Activated CD4-positive, alpha-beta memory T cell treated with anti-CD3 and anti-CD28 coated beads, Interleukin-2, amount 10 ng/mL, durations not matched to agents 7 days and 5 days (primary cell): ENCODE measurements at regions of chr4 and their contacts with region 1.

Region 1: DNA sequence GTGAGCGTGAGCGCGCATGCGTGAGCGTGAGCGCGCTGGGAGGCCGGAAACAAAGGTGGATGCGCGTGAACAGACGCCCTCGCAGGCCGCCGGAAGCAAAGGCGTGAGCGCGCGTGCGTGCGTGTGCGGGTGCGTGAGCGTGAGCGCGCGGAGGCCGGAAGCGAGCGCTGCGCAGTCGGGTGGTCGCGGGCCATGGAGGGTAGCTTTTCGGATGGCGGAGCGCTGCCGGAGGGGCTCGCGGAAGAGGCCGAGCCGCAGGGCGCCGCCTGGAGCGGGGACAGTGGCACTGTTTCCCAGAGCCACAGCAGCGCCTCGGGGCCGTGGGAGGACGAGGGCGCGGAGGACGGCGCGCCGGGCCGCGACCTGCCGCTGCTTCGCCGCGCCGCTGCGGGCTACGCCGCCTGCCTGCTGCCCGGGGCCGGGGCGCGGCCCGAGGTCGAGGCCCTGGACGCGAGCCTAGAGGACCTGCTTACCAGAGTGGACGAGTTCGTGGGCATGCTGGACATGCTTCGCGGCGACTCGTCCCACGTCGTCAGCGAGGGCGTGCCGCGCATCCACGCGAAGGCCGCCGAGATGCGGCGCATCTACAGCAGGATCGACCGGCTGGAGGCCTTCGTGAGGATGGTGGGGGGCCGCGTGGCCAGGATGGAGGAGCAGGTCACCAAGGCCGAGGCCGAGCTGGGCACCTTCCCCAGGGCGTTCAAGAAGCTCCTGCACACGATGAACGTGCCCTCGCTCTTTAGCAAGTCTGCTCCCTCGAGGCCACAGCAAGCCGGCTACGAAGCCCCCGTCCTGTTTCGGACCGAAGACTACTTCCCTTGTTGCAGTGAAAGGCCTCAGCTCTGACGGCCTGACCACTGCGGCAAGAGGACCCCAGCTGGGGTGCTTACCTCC is at the start of gene BLOC1S4:
- DNase-seq: peak; percentile 91
- H3K4me3 Mint-ChIP-seq: peak within 1 kb of the TSS; percentile 88
- H3K27ac Mint-ChIP-seq: peak within 1 kb of the TSS; percentile 87
- H3K4me1 Mint-ChIP-seq: peaks cover 36% of the 10 kb centered on the region
- H3K27me3 Mint-ChIP-seq: no peaks in the 10 kb centered on the region
- total RNA-seq, gene BLOC1S4: 22.9 to 23.2 TPM

Region 2: DNA sequence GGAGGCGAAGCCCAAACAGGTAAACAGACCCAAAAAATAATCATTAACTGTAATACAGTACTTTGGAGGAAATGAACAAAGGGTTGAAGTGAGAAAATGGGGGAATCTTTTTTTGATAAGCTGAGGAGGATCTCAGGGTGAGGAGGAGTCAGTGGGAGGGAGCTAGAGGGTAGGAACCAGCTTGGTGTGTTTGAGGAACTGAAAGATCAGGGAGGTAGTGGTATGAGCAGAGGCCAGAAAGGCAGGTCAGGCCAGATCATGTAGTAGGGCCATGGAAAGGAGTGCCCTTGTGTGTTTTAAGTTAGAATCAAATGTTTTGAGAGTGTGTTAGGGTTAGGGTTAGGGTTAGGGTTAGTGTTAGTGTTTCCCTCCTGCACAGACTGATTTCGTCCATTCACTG is 292.7 kb before region 1 on chr4:
- CTCF ChIA-PET with region 1: no interaction called
- POLR2A ChIA-PET with region 1: no interaction called
- DNase-seq: no peak
- H3K4me3 Mint-ChIP-seq: no peak overlapping the region
- H3K27ac Mint-ChIP-seq: no peak overlapping the region
- H3K4me1 Mint-ChIP-seq: no peaks in the 10 kb centered on the region
- H3K27me3 Mint-ChIP-seq: peaks cover 6% of the 10 kb centered on the region

Region 3: GRCh38 chr4:6640292-6641163 is 75.7 kb before region 1 on chr4 and contains the start of gene MRFAP1:
- CTCF ChIA-PET with region 1: interaction called, 6 read pairs
- POLR2A ChIA-PET with region 1: interaction called, 36 read pairs
- DNase-seq: peak; percentile 96
- H3K4me3 Mint-ChIP-seq: peak within 1 kb of the TSS; percentile 98
- H3K27ac Mint-ChIP-seq: peak within 1 kb of the TSS; percentile 100
- H3K4me1 Mint-ChIP-seq: peaks cover 23% of the 10 kb centered on the region
- H3K27me3 Mint-ChIP-seq: no peaks in the 10 kb centered on the region
- total RNA-seq, gene MRFAP1: 142 to 144 TPM

Region 4: GRCh38 chr4:6688879-6689505 is 27.3 kb before region 1 on chr4:
- CTCF ChIA-PET with region 1: interaction called, 26 read pairs
- POLR2A ChIA-PET with region 1: interaction called, 45 read pairs
- DNase-seq: peak; percentile 91
- H3K4me3 Mint-ChIP-seq: peak overlapping the region; percentile 81
- H3K27ac Mint-ChIP-seq: peak overlapping the region; percentile 97
- H3K4me1 Mint-ChIP-seq: peaks cover 87% of the 10 kb centered on the region
- H3K27me3 Mint-ChIP-seq: no peaks in the 10 kb centered on the region

Region 5: DNA sequence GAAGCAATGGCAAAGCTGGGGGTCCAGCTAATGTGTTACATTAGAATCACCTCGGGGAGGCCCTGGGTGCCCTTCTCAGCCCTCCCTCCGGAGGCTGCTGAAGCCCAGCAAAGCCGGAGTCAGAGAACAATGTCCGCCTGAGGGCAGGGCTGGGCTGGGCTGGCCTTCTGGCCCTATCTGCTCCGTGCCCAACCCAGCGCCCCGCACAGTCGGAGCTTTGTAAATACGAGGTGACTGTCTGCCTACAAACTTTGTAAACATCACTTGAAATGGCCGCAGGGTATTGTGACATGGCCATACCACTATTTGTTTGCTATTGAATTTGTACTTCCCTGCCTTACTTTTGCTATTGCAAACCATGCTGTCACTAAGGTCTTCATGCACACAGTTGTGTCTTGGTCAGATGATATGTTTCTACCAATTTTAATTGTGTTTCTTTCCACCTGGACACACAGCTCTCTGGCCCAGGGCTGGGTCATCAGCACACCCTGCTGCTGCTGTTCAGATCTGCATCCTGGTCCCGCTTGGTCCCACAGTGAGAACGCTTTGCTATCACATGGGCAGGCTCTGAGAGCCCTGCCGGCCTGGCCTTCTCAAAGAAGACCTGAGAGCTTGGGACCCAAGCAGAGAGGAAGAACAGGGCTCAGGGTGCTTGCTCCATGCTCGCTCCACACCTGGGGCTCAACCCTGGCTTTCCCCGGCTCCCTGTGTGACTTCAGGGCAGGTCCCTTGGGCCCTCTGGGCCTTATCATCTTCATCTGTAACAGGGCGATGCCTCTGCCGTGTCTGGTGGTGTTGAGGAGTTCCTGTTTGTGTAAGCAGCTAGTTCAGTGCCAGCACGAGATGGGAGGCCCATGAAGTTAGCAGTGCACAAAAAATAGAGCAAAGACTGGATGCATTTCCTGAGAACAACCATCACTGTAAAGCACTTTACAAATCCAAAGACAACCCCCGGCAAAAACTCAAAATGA is 20.3 kb before region 1 on chr4:
- CTCF ChIA-PET with region 1: interaction called, 26 read pairs
- POLR2A ChIA-PET with region 1: interaction called, 45 read pairs
- DNase-seq: peak; percentile 77
- H3K4me3 Mint-ChIP-seq: peak overlapping the region; percentile 61
- H3K27ac Mint-ChIP-seq: peak overlapping the region; percentile 92
- H3K4me1 Mint-ChIP-seq: peaks cover 88% of the 10 kb centered on the region
- H3K27me3 Mint-ChIP-seq: no peaks in the 10 kb centered on the region

Region 6: GRCh38 chr4:6727081-6727942 is 11.0 kb after region 1 on chr4:
- CTCF ChIA-PET with region 1: no interaction called
- POLR2A ChIA-PET with region 1: no interaction called
- DNase-seq: no peak
- H3K4me3 Mint-ChIP-seq: no peak overlapping the region
- H3K27ac Mint-ChIP-seq: no peak overlapping the region
- H3K4me1 Mint-ChIP-seq: peaks cover 3% of the 10 kb centered on the region
- H3K27me3 Mint-ChIP-seq: no peaks in the 10 kb centered on the region

Region 7: GRCh38 chr4:6772223-6772928 is 56.1 kb after region 1 on chr4:
- CTCF ChIA-PET with region 1: no interaction called
- POLR2A ChIA-PET with region 1: no interaction called
- DNase-seq: no peak
- H3K4me3 Mint-ChIP-seq: no peak overlapping the region
- H3K27ac Mint-ChIP-seq: no peak overlapping the region
- H3K4me1 Mint-ChIP-seq: peaks cover 25% of the 10 kb centered on the region
- H3K27me3 Mint-ChIP-seq: peaks cover 20% of the 10 kb centered on the region

Region 8: DNA sequence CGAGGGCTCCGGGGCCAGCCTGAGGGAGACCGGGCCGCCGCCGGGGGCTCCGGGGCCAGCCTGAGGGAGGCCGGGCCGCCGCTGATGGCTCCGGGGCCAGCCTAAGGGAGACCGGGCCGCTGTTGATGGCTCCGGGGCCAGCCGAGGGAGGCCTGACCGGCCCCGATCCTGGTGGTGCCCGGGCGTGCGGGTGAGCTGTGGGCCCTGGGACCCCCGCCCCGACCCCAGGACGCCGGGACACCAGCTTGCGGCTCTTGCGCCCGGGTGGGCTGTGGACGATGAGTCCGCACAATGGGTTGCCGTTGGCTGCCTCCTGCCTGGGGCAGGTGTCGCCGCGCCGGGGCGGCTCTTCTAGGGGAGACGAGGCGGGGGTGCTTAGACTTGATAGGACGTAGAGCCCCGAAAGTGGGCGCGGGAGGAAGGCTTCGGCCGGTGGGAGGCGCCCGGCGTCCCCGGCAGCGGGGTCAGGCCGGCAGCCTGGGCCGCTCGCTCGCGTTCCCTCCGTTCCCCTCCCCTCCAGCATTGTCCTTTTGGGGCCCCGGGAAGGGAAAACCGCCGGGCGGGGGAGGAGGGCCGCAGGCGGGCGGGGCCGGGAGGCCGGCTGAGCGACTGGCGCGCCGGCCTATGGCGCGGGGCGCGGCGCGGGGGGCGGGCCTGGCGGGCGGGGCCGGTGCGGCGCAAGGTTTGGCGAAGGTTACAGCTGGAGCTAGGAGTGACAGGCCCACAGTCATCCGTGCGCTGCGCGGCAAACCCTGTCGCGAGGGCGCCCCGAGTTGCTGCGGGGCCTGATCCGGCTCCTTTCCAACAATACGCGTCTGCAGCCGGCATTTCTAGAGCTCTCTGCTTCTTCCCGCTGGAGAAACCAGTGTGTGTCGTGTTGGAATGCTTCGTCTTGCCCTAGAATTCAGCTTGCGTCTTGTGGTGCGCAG is 67.1 kb after region 1 on chr4:
- CTCF ChIA-PET with region 1: interaction called, 4 read pairs
- POLR2A ChIA-PET with region 1: interaction called, 16 read pairs
- DNase-seq: peak; percentile 92
- H3K4me3 Mint-ChIP-seq: peak overlapping the region; percentile 79
- H3K27ac Mint-ChIP-seq: peak overlapping the region; percentile 79
- H3K4me1 Mint-ChIP-seq: peaks cover 60% of the 10 kb centered on the region
- H3K27me3 Mint-ChIP-seq: peaks cover 2% of the 10 kb centered on the region

Region 9: DNA sequence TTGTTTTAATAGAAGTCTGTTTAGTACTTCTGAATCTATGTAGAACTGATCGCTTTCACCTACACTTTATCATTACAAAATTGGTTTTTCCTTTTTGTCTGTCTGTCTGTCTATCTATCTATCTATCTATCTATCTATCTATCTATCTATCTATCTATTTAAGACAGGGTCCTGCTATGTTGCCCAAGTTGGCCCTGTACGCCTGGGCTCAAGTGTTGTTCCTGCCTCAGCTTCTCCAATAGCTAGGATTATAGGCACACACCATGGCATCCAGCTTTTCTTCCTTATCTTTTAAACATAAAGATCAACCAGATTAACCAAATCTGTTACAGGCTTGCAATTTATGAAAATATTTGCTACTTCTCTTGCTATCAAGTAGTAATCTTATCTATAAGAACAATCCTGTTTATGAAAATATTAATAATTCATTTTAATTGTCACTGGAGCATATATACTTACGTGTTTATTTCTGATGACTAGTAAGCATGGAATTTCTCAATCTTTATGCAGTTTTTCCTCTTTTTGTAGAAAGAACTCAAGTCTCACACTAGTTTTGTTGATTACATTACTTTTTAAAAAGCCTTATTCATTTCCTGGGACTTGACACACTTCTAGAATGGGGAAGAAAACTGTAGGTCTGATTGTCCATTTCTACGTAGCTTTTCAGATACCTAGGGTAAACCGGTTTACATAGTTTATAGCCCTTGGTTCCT is 90.8 kb after region 1 on chr4:
- CTCF ChIA-PET with region 1: no interaction called
- POLR2A ChIA-PET with region 1: no interaction called
- DNase-seq: no peak
- H3K4me3 Mint-ChIP-seq: no peak overlapping the region
- H3K27ac Mint-ChIP-seq: no peak overlapping the region
- H3K4me1 Mint-ChIP-seq: peaks cover 2% of the 10 kb centered on the region
- H3K27me3 Mint-ChIP-seq: no peaks in the 10 kb centered on the region

Region 10: GRCh38 chr4:6898763-6899162 is 182.5 kb after region 1 on chr4:
- CTCF ChIA-PET with region 1: interaction called, 15 read pairs
- POLR2A ChIA-PET with region 1: no interaction called
- DNase-seq: peak; percentile 39
- H3K4me3 Mint-ChIP-seq: peak overlapping the region; percentile 40
- H3K27ac Mint-ChIP-seq: peak overlapping the region; percentile 94
- H3K4me1 Mint-ChIP-seq: peaks cover 63% of the 10 kb centered on the region
- H3K27me3 Mint-ChIP-seq: no peaks in the 10 kb centered on the region

Region 11: DNA sequence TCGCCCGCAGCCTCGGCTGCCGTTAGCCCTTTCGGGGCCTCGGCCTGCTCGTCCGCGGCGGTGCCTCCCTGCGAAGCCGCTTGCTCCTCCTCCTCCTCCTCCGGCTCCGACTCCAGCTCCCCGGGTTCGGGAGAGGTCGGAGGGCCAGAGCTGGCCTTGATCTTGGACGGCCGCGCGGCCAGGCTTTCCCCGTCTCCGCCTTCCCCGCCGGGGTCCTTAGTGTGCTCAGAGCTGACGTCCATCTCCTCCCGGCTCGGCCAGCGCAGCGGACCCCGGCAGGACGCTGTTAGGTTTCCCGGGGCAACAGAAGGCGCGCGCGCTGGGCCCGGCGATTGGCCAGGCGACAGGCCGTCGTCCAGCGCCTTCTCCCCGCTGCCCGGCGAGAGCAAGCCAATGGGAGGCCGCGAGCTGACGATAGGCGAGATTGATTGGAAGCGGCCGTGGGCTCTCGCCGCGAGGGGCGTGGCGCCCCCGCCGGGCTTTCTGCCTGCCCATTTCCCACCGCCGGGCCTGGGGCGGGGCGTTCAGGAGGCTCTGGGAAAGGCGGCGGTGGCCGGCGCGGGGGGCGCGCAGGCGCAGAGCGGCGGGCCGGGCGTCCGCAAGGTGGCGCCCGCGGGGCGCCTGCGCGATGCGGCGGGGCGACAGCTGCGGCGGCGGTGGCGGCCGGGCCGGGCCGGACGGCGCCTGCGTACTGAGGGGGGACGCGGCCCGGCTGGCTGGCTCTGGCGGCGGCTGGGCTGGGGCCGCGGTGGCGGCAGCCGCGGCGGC is 326.6 kb after region 1 on chr4 and contains the start of gene TADA2B:
- CTCF ChIA-PET with region 1: interaction called, 4 read pairs
- POLR2A ChIA-PET with region 1: interaction called, 10 read pairs
- DNase-seq: peak; percentile 96
- H3K4me3 Mint-ChIP-seq: peak within 1 kb of the TSS; percentile 94
- H3K27ac Mint-ChIP-seq: peak within 1 kb of the TSS; percentile 78
- H3K4me1 Mint-ChIP-seq: peaks cover 50% of the 10 kb centered on the region
- H3K27me3 Mint-ChIP-seq: peaks cover 10% of the 10 kb centered on the region
- total RNA-seq, gene TADA2B: 26.6 to 27.3 TPM